ENCODE measurements at regions of chr21 and their contacts with region 1.

Region 1: DNA sequence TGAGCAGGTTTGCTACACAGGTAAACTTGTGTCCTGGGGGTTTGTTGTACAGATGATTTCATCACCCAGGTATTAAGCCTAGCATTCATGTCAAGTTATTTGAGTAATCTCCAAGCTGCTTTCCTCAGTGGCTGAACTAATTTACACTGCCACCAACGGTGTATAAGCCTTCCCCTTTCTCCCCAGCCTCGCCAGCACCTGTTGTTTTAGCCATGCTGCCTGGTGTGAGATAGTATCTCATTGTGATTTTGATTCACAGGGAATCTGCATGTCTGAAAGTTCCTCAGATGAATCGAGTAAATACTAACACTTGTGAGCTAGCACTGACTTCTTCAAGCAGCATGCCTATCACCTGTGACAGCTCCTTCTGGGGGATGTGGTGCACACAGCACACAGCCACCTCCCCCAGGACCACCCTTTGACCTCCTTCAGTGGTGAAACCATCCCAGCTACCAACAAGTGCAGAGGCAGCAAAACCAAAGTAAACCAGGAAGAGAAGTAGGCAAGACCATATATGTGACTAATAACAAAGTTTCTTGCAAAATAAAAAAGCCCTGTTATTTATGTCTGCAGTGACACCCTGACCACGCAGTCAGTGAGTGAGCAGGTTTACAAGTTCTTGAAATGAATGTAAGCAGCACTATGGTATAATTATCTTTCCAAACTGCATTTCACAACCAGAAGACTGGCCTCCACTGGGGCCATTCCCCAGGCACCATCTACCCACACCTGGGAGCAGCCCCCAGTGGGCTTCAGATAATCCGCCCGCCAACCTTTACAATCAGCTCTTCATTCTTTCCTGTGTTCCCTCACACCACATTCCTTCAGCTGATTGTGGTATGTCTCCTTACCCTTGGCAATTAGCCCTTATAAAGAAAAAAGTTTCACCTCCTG is 173.7 kb downstream of the ETS2 start:
- DNase-seq: no peak
- H3K4me3 Mint-ChIP-seq: no peak overlapping the region
- H3K27ac Mint-ChIP-seq: peak overlapping the region; percentile 55
- H3K4me1 Mint-ChIP-seq: peaks cover 42% of the 10 kb centered on the region
- H3K27me3 Mint-ChIP-seq: peaks cover 4% of the 10 kb centered on the region

Region 2: GRCh38 chr21:38958940-38959691 is 20.4 kb before region 1 on chr21:
- intact Hi-C with region 1: loop called (anchors 1 kb)
- DNase-seq: no peak
- H3K4me3 Mint-ChIP-seq: no peak overlapping the region
- H3K27ac Mint-ChIP-seq: peak overlapping the region; percentile 65
- H3K4me1 Mint-ChIP-seq: peaks cover 23% of the 10 kb centered on the region
- H3K27me3 Mint-ChIP-seq: no peaks in the 10 kb centered on the region

Region 3: DNA sequence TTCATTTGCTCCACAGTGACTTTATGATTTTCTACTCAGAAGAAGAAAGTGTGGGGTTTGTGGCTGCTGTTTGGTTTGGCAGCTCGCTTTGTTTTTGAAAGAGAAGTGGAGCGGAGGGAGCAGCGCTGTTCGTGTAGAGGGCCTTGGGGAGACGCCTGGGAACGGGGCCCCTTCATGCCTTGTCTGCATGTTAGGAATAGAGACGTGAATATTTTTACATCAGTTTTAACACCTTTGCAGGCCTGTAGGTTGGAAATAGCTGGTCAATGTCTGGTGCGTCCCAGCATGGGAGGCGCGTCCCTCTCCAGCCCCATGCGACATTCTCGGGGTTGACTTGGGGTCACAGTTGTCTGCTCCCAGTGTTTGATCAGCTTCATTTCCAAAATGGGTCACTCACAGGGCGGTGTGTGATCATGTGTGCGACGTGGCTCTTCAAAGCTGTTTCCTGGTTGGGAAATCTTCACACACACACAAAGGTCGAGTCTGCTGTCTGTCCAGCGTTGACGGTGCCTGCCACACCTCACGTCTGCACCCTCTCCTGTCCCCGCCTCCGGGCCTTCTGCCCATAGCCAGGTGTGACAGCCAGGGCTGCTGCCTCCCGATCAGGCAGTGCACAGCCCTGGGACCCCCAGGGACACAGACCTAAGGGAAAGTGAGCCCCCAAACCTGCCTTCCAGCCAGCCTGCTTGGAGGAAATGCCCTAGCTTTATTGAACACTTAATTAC is 54.6 kb after region 1 on chr21:
- intact Hi-C with region 1: loop called (anchors 2 kb)
- DNase-seq: no peak
- H3K4me3 Mint-ChIP-seq: no peak overlapping the region
- H3K27ac Mint-ChIP-seq: no peak overlapping the region
- H3K4me1 Mint-ChIP-seq: no peaks in the 10 kb centered on the region
- H3K27me3 Mint-ChIP-seq: peaks cover 17% of the 10 kb centered on the region

Measured in activated T-helper 1 cell treated with anti-CD3 and anti-CD28 coated beads, Interleukin-12 subunit alpha, Interleukin-12 subunit beta, Interleukin-2, Interleukin-4 antibody, amounts not matched to agents 30 ng/mL and 10 ng/mL and 1 ng/mL, durations not matched to agents 14 hours and 24 hours and 36 hours (primary cell).